SK-N-SH (cell line): ENCODE measurements at regions of chr14 and their contacts with region 1.

Region 1: DNA sequence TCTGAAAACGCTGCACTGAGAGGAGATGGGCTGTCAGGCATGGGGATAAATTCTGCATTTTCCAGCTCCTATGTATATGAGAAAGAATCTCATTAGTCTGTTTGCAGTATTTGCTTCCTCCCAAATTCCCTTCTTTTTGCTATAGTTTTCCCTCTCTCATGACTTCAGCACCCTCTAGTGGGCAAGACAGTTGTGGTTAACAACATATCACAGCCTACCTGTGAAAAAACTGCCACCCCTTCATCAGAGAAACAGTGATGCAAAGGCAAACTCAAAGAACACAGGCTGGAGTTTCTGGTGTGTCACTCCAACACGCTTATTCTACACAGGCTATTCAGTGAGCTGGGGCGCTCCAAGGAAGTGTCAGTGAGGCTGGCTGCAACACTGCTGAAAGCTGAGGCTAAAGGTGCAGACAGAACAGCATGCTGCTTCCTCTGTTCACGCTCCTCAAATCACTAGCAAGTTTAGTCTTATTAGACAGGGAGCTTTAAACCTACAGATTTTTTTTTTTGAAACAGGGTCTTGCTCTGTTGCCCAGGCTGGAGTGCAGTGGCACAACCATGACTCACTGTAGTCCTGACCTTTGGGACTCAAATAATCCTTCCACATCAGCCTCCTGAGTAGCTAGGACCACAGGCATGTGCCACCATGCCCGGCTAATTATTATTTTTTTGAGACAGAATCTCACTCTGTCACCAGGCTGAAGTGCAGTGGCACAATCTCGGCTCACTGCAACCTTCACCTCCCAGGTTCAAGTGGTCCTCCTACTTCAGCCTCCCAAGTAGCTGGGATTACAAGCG is 19.3 kb downstream of the ZC2HC1C start:
- DNase-seq: peak; percentile 66
- H3K4me3 ChIP-seq: no peak overlapping the region
- H3K27ac ChIP-seq: no peak overlapping the region
- H3K4me1 ChIP-seq: no peaks in the 10 kb centered on the region
- H3K27me3 ChIP-seq: no peaks in the 10 kb centered on the region
- CTCF ChIP-seq: peak; percentile 91
- EP300 ChIP-seq: no peak
- RAD21 ChIP-seq: peak; percentile 95

Region 2: DNA sequence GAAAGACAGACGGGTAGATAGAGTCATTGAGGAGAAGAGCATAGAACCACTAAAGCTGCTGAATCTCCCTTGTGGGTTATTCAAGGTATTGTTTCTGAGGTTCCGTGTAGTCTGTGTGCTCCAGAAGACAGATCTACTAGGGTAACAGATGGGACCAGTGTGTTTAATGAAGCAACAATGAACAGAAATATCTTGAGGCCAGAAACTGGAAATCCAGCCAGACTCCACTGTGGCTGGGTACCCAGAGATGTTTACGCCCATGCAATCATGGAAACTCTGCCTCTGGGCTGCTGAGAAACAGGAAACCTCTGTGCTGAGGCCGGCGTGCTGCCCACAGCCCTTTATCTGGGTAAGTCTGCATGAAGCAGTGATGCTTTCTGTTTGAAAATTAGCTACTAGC is 221.1 kb before region 1 on chr14:
- CTCF ChIA-PET with region 1: interaction called, 44 read pairs
- POLR2A ChIA-PET with region 1: no interaction called
- DNase-seq: peak; percentile 61
- H3K4me3 ChIP-seq: no peak overlapping the region
- H3K27ac ChIP-seq: peak overlapping the region in 1 of 2 experiments; percentile 66; a peak in 2 of 4 replicates
- H3K4me1 ChIP-seq: peaks cover 0 to 4% of the 10 kb centered on the region in 2 experiments; a peak in 1 of 4 replicates
- H3K27me3 ChIP-seq: no peaks in the 10 kb centered on the region
- CTCF ChIP-seq: no peak
- EP300 ChIP-seq: no peak
- RAD21 ChIP-seq: no peak

Region 3: GRCh38 chr14:74922739-74923401 is 165.9 kb before region 1 on chr14 and contains the start of gene RPS6KL1:
- CTCF ChIA-PET with region 1: interaction called, 12 read pairs
- POLR2A ChIA-PET with region 1: no interaction called
- DNase-seq: peak; percentile 98
- H3K4me3 ChIP-seq: peak within 1 kb of the TSS; percentile 52 to 61
- H3K27ac ChIP-seq: no peak within 1 kb of the TSS
- H3K4me1 ChIP-seq: no peaks in the 10 kb centered on the region; a peak in 1 of 4 replicates
- H3K27me3 ChIP-seq: peaks cover 6% of the 10 kb centered on the region; the same call in 1 of the 2 replicates
- CTCF ChIP-seq: no peak
- EP300 ChIP-seq: no peak
- RAD21 ChIP-seq: no peak
- polyA plus RNA-seq, gene RPS6KL1: 2.5 and 4.4 TPM in 2 replicates

Region 4: GRCh38 chr14:74955229-74956026 is 133.3 kb before region 1 on chr14 and contains the start of gene PGF:
- CTCF ChIA-PET with region 1: interaction called, 290 read pairs
- POLR2A ChIA-PET with region 1: no interaction called
- DNase-seq: peak; percentile 93
- H3K4me3 ChIP-seq: peak within 1 kb of the TSS; percentile 49 to 65
- H3K27ac ChIP-seq: peak within 1 kb of the TSS in 1 of 2 experiments; percentile 51; a peak in 1 of 4 replicates
- H3K4me1 ChIP-seq: peaks cover 0 to 43% of the 10 kb centered on the region in 2 experiments; a peak in 2 of 4 replicates
- H3K27me3 ChIP-seq: no peaks in the 10 kb centered on the region
- CTCF ChIP-seq: no peak
- EP300 ChIP-seq: no peak
- RAD21 ChIP-seq: no peak
- polyA plus RNA-seq, gene PGF: 2.3 and 4.4 TPM in 2 replicates

Region 5: DNA sequence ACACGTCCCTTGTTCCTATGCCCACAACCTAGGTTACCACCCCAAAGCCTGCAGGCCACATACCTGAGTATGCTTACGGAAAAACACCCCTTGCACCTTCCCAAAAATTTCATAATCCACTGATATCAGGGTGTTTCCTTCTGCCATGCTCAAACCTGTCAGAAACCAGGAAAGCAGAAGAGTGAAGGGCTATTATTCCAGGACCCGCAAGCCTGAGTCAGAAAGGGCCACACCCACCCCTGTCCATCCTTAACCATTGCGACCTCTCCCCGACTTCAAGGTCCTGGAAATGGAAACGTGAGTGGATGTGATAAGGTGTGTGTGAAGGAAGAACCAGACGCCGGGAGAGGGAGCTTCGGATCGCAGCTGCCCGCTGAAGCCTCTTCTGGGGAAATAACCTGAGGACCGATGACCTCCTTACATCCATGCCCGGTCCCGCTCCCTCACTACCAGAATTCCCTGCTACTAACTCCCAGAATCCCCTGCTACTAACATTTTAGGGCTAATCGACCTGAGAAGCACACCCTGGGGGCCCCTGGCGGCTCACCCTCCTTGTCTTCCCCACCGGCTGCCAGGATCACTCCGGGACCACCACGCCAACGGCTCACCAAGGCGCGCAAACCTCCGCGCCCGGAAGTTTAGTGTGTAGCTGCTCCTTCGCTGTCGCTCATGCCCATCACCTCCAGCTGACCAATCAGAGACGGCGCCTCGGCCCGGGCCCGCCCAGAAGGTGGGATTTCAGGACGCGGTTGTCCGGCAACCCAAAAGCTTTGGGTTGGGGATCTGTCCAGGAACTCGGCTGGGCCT is 25.2 kb before region 1 on chr14 and contains the start of gene ACYP1:
- CTCF ChIA-PET with region 1: interaction called, 26 read pairs
- POLR2A ChIA-PET with region 1: no interaction called
- DNase-seq: peak; percentile 93
- H3K4me3 ChIP-seq: peak within 1 kb of the TSS; percentile 71 to 78
- H3K27ac ChIP-seq: peak within 1 kb of the TSS; percentile 10 to 67; a peak in 3 of 4 replicates
- H3K4me1 ChIP-seq: peaks cover 0 to 8% of the 10 kb centered on the region in 2 experiments; a peak in 1 of 4 replicates
- H3K27me3 ChIP-seq: no peaks in the 10 kb centered on the region
- CTCF ChIP-seq: 0 out of 2 replicates have a peak, but pooled peaks have one; percentile 7
- EP300 ChIP-seq: no peak
- RAD21 ChIP-seq: no peak
- polyA plus RNA-seq, gene ACYP1: 53.5 and 70.1 TPM in 2 replicates

Region 6: DNA sequence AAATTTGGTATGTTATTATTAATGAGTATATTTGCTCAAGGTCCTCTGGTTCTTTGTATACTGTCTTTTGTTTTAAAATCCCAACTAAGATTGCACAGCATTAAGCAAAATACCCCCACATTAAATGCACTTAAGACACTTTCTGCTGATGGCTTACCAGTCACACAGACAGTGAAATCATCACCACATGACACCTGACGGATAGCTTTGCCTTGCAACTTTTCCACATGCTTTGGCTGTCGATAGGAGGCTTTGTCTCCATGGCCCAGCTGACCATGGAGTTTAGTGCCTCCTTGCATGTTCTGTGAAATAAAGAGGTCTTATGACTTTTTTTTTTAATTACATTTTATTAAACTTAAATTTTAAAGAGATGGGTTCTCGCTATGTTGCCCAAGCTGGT is 18.4 kb after region 1 on chr14:
- CTCF ChIA-PET with region 1: interaction called, 35 read pairs
- POLR2A ChIA-PET with region 1: no interaction called
- DNase-seq: no peak
- H3K4me3 ChIP-seq: no peak overlapping the region
- H3K27ac ChIP-seq: no peak overlapping the region
- H3K4me1 ChIP-seq: no peaks in the 10 kb centered on the region
- H3K27me3 ChIP-seq: no peaks in the 10 kb centered on the region
- CTCF ChIP-seq: no peak
- EP300 ChIP-seq: no peak
- RAD21 ChIP-seq: no peak

Region 7: DNA sequence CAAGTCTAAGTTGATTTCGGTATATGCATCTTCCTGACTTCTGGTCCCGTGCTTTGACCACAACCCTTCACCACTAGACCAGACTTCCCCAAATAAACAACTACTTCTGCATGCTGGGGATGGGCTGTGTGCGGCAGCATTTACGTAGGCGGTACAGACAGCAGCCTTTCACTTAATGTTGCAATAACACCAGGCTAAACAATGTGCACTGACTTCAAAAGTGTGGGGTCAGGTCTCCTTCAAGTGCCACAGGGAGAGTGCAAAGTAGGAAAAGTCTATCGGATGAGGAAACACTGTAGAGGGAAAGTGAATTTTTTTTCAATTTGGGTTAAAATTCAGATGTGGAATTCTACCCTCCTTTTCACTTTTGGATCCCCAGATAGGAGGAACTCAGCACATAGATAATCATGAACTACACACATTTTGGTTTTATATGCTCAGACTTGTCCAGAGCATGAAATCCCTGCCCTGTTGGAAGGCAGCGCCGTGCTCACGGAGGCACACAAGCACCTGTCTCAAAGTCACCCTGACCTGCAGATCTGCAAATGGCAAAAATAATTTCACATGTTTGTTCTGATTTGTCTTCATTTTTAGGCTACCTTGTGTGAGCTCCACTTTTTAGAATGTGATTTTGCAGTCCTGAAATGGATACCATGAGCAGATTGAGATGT is 186.3 kb after region 1 on chr14:
- CTCF ChIA-PET with region 1: no interaction called
- POLR2A ChIA-PET with region 1: no interaction called
- DNase-seq: no peak
- H3K4me3 ChIP-seq: no peak overlapping the region
- H3K27ac ChIP-seq: no peak overlapping the region
- H3K4me1 ChIP-seq: peaks cover 4 to 16% of the 10 kb centered on the region in 2 experiments; a peak in 3 of 4 replicates
- H3K27me3 ChIP-seq: no peaks in the 10 kb centered on the region
- CTCF ChIP-seq: no peak
- EP300 ChIP-seq: no peak
- RAD21 ChIP-seq: no peak